Heart right ventricle (tissue), 16 donors: ENCODE measurements at regions of chr15 and their contacts with region 1.

Region 1: DNA sequence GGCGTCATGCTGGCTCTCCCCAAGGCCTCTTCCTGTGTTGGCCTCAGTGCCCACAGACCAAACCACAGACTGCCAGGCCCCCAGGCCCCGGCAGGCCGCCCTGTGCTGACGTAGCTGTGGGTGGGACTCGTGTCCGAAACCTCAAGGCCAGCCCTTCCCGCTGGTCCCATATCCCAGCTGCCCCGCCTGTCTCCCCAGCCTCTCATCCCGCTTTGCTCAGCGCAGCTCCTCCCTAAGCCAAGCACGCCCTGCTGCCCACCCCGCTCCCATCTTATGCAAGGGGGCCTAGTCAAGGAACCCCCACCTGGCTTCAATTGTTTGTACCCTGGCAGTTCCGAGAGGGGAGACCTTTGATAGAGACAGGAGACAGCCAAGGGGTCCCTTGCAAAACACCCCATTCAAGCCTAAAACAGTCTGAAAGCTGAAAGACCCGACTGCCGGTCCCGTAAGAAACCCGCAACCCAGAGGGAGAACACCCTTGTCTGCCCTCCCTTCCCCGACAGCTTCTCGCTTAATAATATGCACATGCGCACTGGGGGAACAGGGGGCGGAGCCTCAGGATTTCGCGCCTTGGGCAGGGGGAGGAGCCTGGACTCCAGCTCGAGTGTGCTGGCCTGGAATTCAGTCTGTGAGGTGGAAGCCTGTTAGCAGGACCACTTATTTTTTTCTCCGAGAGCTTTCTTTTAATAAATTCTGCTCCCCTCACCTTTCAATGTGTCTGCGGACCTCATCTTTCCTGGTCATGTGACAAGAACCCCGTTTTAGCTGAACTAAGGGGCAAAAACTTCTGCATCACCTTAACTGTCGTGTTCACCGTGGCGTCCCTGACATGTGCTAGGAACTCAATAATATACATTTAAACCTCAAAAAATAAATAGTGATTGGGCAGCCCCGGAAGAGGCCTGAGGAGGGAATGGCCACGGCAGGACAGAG is 17.2 kb downstream of the TNFAIP8L3 start:
- DNase-seq: peak; percentile 66 to 71
- ATAC-seq: peak; percentile 38 to 85 (median 62)
- H3K4me3 ChIP-seq: peak overlapping the region in 7 of 10 donors; percentile 18 to 41 (median 40)
- H3K27ac ChIP-seq: peak overlapping the region in 6 of 10 donors; percentile 35 to 74 (median 52)
- H3K4me1 ChIP-seq: peaks cover 0 to 35% (median 15%) of the 10 kb centered on the region in 9 donors
- H3K27me3 ChIP-seq: no peaks in the 10 kb centered on the region
- CTCF ChIP-seq: no peak

Region 2: GRCh38 chr15:51132384-51133139 is 55.1 kb after region 1 on chr15:
- intact Hi-C with region 1: loop called in 1 of 10 experiments (anchors 10 kb)
- DNase-seq: peak in 1 of 2 donors; percentile 26
- ATAC-seq: peak; percentile 23 to 85 (median 73)
- H3K4me3 ChIP-seq: no peak overlapping the region
- H3K27ac ChIP-seq: peak overlapping the region in 1 of 10 donors; percentile 72
- H3K4me1 ChIP-seq: peaks cover 0 to 20% (median 2%) of the 10 kb centered on the region in 9 donors
- H3K27me3 ChIP-seq: no peaks in the 10 kb centered on the region
- CTCF ChIP-seq: peak; percentile 53 to 85 (median 79)